Endothelial cell of umbilical vein (primary cell): ENCODE measurements at regions of chr3 and their contacts with region 1.

Region 1: DNA sequence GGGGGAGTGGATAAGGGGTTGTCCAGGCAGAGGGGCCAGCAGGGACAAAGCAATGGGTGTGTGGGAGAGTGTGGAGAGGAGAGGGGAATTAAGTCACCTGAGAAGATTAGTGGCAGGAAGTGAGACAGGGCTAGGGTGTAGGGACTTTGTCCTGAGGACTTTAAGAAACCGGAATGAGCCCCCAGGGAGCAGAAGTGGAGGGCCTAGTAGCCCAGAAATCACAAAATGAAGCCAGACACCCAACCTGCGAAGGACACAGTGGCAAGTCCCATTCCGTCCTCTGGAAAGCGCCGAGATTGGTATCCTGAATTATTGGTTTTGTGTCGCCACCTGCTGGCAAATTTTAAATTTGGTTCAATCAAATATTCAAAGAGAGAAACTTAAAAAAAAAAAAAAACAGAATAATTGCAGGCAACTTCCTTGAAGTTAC is 78.0 kb upstream of the SLC25A36 start:
- DNase-seq: peak; percentile 58
- H3K4me3 ChIP-seq: no peak overlapping the region
- H3K27ac ChIP-seq: no peak overlapping the region
- H3K4me1 ChIP-seq: no peaks in the 10 kb centered on the region
- H3K27me3 ChIP-seq: no peaks in the 10 kb centered on the region
- CTCF ChIP-seq: peak; percentile 9 to 39
- POLR2A ChIP-seq: no peak

Region 2: GRCh38 chr3:140128631-140129030 is 735.0 kb before region 1 on chr3:
- CTCF ChIA-PET with region 1: no interaction called
- POLR2A ChIA-PET with region 1: no interaction called
- dilution Hi-C with region 1: no loop called
- intact Hi-C with region 1: loop called (anchors 1 kb)
- DNase-seq: peak; percentile 19
- H3K4me3 ChIP-seq: no peak overlapping the region
- H3K27ac ChIP-seq: no peak overlapping the region
- H3K4me1 ChIP-seq: no peaks in the 10 kb centered on the region
- H3K27me3 ChIP-seq: no peaks in the 10 kb centered on the region
- CTCF ChIP-seq: peak; percentile 21 to 44
- POLR2A ChIP-seq: no peak